GM10248 (cell line): ENCODE measurements at regions of chr2 and their contacts with region 1.

Region 1: GRCh38 chr2:68487773-68488355 is 20.5 kb downstream of the APLF start:
- DNase-seq: peak; percentile 38
- CTCF ChIP-seq: peak; percentile 33

Region 2: DNA sequence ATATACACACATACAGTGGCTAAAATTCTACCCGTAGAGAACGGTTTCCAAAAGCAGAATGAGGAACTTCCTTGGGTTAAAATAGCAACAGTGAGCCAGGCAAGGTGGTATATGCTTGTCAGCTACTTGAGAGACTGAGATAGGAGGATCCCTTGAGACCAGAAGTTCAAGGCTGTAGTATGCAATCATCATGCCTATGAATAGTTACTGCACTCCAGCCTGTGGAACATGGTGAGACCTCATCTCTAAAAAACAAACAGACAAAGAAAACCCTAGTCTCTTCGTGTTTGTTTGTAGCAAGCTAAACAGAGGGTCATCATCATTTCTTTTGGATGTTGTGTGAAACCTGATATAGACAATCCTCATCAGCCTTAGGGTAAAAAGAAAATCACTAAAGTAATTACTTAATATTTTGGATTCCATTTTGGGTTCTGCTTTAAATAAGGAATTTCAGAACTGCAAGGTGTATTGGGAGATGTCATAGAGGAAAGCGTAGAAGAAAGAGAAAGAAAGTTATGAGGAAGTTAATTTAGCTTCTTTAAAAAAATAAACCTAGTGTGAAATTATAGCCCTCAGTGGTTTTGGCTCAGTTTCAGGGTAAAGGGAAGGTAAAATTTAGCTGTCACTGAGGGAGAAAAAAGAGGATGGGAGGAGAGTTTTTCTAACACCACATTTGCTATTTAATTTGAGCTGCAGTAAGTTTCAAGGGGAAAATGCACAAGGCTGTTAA is 76.3 kb before region 1 on chr2:
- CTCF ChIA-PET with region 1: no interaction called
- POLR2A ChIA-PET with region 1: no interaction called
- DNase-seq: no peak
- CTCF ChIP-seq: no peak

Region 3: DNA sequence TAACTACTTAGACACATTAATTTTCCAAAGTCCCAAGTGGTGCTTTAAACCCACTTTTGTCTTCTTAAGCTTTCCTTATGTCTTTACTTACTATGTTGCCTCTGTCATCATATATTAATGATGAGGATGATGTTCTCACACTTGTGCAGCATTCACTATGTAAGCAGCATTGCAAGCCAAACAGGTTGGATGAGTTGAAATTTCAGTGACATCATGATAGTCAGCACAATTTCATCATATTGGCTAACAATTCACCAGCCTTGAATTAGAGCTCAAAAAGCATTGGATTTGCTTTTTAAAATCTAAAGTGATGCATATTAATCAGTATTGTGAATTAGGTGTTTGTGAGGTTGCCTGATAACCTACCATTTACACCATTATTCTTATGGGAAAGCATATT is 12.8 kb before region 1 on chr2:
- CTCF ChIA-PET with region 1: interaction called, 11 read pairs
- POLR2A ChIA-PET with region 1: no interaction called
- DNase-seq: no peak
- CTCF ChIP-seq: no peak

Region 4: GRCh38 chr2:68646302-68646701 is 158.4 kb after region 1 on chr2:
- CTCF ChIA-PET with region 1: interaction called, 10 read pairs
- POLR2A ChIA-PET with region 1: no interaction called
- DNase-seq: no peak
- CTCF ChIP-seq: peak; percentile 25

Region 5: GRCh38 chr2:68796294-68796905 is 308.5 kb after region 1 on chr2:
- CTCF ChIA-PET with region 1: no interaction called
- POLR2A ChIA-PET with region 1: no interaction called
- DNase-seq: no peak
- CTCF ChIP-seq: no peak